Activated CD4-positive, alpha-beta memory T cell treated with anti-CD3 and anti-CD28 coated beads for 36 hours (primary cell): ENCODE measurements at regions of chr15 and their contacts with region 1.

Region 1: GRCh38 chr15:70097337-70098169 is at the start of gene TLE3:
- DNase-seq: peak; percentile 99
- H3K4me3 Mint-ChIP-seq: peak within 1 kb of the TSS; percentile 88
- H3K27ac Mint-ChIP-seq: peak within 1 kb of the TSS; percentile 95
- H3K4me1 Mint-ChIP-seq: peaks cover 33% of the 10 kb centered on the region
- H3K27me3 Mint-ChIP-seq: no peaks in the 10 kb centered on the region
- total RNA-seq, gene TLE3: 85.4 to 95.1 TPM

Region 2: DNA sequence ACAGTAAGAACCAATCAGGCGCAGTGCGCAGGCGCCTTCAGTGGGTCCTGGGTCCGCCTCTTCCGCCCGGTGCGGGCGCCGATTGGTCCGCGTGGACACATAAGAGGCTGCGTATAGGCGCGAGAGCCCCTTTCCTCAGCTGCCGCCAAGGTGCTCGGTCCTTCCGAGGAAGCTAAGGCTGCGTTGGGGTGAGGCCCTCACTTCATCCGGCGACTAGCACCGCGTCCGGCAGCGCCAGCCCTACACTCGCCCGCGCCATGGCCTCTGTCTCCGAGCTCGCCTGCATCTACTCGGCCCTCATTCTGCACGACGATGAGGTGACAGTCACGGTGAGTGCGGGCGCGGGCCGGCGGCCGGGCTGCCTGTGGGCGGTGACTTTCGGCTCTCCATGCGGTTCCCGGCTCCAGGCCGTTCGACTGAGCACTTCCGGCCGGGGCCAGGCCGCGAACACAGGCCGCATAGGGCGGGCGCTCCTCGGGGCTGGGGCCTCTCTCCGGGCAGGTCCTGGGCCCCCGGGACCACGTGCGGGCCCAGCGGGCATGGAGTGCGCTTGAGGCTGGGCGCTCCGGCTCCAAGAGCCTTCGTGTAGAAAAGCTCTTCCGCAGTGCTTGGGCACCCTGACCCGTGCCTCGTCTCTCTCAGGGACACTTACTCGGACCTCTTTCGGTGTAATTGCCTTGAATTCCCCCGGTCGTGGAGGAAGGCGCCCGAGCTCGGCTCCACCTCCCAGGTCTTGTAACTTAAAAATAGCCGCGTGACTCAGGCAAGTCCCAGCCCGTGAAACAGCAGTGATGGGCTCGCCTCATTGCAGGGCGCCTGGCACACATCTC is 644.6 kb before region 1 on chr15 and contains the start of gene RPLP1:
- CTCF ChIA-PET with region 1: interaction called, 3 read pairs
- POLR2A ChIA-PET with region 1: interaction called, 15 read pairs
- intact Hi-C with region 1: loop called (anchors 5 kb)
- DNase-seq: peak; percentile 97
- H3K4me3 Mint-ChIP-seq: peak within 1 kb of the TSS; percentile 93
- H3K27ac Mint-ChIP-seq: peak within 1 kb of the TSS; percentile 95
- H3K4me1 Mint-ChIP-seq: peaks cover 23% of the 10 kb centered on the region
- H3K27me3 Mint-ChIP-seq: no peaks in the 10 kb centered on the region
- total RNA-seq, gene RPLP1: 2,547 to 2,620 TPM

Region 3: DNA sequence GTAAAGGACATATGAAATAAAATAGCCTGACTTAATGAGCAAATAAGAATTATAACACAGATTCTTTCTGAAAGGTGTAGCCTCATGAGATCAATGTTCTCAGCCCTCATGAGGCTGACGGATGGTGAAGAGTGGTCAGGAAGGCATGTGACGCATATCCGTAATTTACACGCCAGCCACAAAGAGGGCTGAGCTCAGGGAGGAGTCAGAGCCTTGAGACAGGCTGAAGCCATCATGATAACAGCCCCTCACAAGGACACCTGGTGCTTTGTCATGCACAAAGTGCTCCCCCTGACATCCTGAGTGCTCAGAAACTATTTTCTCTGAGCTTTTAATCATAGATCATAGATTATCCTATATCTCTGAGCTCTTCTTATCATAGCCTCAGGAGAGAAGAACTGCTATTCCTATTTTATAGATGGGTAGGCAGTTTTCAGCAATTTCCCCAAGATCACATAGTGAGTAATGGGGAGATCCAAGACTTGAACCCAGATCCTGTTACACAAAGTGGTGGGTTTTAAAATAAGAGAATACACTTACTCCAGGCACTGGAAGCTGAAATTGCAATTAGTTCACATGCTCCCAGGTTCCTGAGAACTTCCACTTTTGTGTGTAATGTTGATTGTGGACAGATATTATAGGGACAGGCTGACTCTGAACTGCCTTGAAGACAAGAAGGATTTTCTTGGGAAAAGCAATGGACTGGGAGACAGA is 377.9 kb before region 1 on chr15:
- CTCF ChIA-PET with region 1: interaction called, 4 read pairs
- POLR2A ChIA-PET with region 1: interaction called, 4 read pairs
- intact Hi-C with region 1: loop called (anchors 2 kb)
- DNase-seq: peak; percentile 83
- H3K4me3 Mint-ChIP-seq: no peak overlapping the region
- H3K27ac Mint-ChIP-seq: peak overlapping the region; percentile 87
- H3K4me1 Mint-ChIP-seq: peaks cover 84% of the 10 kb centered on the region
- H3K27me3 Mint-ChIP-seq: peaks cover 3% of the 10 kb centered on the region

Region 4: DNA sequence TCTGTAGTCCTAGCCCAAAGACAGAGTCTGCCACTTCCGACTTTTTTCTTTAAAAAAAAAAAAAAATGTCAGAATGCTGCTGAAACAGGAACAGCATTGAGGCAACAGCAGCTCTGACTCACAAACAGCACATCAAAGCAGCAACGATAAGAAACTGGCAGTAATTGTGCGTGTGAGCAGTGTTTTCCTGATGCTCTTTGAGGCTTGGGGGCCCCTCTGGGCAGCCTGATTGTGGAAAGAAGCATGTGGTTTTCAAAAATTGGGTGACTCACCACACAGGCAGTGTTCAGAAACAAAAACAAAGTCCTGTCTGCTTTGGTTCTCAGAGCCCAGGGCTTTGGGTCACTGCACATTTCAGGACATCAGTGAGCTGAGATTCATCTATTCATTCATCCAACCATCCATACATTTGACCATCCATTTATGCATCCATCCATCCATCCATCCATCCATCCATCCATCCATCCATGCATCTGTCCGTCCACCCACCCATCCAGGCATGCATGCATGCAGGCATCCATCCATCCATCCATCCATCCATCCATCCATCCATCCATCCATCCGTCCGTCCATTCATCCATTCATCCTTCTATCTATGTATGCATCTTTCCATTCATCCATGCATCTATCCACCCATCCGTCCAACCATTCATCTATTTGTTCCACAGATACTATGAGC is 336.5 kb before region 1 on chr15:
- CTCF ChIA-PET with region 1: interaction called, 5 read pairs
- POLR2A ChIA-PET with region 1: interaction called, 43 read pairs
- intact Hi-C with region 1: loop called (anchors 1 kb)
- DNase-seq: peak; percentile 93
- H3K4me3 Mint-ChIP-seq: peak overlapping the region; percentile 41
- H3K27ac Mint-ChIP-seq: peak overlapping the region; percentile 89
- H3K4me1 Mint-ChIP-seq: peaks cover 73% of the 10 kb centered on the region
- H3K27me3 Mint-ChIP-seq: peaks cover 3% of the 10 kb centered on the region

Region 5: DNA sequence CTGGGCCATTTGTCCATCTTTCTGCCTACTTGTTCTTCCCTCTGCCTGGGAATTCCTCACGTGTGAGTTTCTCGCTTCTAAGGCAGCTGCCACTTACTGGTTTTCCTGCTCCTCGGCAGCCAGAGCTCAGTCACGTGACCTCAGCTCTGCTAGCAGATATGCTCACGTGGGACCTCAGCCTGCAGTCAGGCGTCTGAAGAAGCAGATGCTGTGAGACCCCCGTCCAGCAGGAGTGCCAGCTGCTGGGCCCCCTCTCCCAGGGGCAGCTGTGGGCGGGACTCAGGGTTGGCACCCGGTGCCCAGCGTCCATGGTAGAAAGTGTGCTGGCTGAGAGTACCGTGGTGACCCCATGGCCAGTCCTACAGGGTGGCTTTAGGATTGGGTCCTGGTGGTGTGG is 161.5 kb after region 1 on chr15:
- CTCF ChIA-PET with region 1: no interaction called
- POLR2A ChIA-PET with region 1: no interaction called
- intact Hi-C with region 1: loop called (anchors 2 kb)
- DNase-seq: no peak
- H3K4me3 Mint-ChIP-seq: peak overlapping the region; percentile 48
- H3K27ac Mint-ChIP-seq: peak overlapping the region; percentile 63
- H3K4me1 Mint-ChIP-seq: peaks cover 40% of the 10 kb centered on the region
- H3K27me3 Mint-ChIP-seq: peaks cover 1% of the 10 kb centered on the region

Region 6: GRCh38 chr15:70504299-70504951 is 406.9 kb after region 1 on chr15:
- CTCF ChIA-PET with region 1: interaction called, 6 read pairs
- POLR2A ChIA-PET with region 1: interaction called, 13 read pairs
- intact Hi-C with region 1: loop called (anchors 5 kb)
- DNase-seq: peak; percentile 81
- H3K4me3 Mint-ChIP-seq: peak overlapping the region; percentile 17
- H3K27ac Mint-ChIP-seq: peak overlapping the region; percentile 79
- H3K4me1 Mint-ChIP-seq: peaks cover 71% of the 10 kb centered on the region
- H3K27me3 Mint-ChIP-seq: peaks cover 2% of the 10 kb centered on the region